PC-3 (cell line): ENCODE measurements at regions of chr14 and their contacts with region 1.

Region 1: DNA sequence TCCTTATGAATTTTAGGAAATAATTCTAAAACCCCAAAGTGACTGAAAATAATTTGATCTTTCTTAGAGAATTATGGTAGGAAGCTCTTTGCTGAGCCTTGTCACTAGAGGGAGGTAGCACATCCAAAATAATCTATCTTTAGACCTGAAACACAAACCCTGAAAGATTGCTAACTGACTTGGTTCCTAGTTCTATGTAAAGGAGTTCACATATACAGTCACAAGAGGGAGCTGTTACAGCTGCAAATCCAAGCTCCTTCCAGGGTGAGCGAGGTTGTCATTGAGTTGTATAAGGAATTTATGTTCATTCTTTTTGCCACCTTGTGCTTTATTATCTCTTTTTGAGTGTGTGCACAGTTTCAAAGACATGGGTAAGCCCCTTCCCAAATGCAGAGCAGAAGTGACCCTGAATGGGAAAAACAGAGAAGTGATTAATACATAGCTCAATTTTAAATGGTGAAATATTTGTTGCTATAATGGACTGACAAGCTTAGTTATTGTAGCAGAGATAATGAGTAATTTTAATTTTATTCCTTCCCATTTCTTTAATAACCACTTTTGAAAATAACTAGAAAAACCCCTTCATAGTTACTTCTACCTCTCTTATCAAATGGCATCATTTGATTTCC is 387.9 kb downstream of the DAD1 start:
- DNase-seq: peak; percentile 81
- ATAC-seq: peak; percentile 97
- H3K4me3 ChIP-seq: no peak overlapping the region
- H3K27ac ChIP-seq: no peak overlapping the region
- H3K4me1 ChIP-seq: no peaks in the 10 kb centered on the region
- H3K27me3 ChIP-seq: no peaks in the 10 kb centered on the region
- CTCF ChIP-seq: peak; percentile 93

Region 2: GRCh38 chr14:21233457-21234076 is 967.5 kb before region 1 on chr14:
- CTCF ChIA-PET with region 1: no interaction called
- POLR2A ChIA-PET with region 1: no interaction called
- intact Hi-C with region 1: no loop called
- DNase-seq: no peak
- ATAC-seq: 0 out of 2 replicates have a peak, but pooled peaks have one; percentile 22
- H3K4me3 ChIP-seq: no peak overlapping the region
- H3K27ac ChIP-seq: no peak overlapping the region
- H3K4me1 ChIP-seq: no peaks in the 10 kb centered on the region
- H3K27me3 ChIP-seq: no peaks in the 10 kb centered on the region
- CTCF ChIP-seq: peak; percentile 41; the same call in 1 of the 2 replicates

Region 3: DNA sequence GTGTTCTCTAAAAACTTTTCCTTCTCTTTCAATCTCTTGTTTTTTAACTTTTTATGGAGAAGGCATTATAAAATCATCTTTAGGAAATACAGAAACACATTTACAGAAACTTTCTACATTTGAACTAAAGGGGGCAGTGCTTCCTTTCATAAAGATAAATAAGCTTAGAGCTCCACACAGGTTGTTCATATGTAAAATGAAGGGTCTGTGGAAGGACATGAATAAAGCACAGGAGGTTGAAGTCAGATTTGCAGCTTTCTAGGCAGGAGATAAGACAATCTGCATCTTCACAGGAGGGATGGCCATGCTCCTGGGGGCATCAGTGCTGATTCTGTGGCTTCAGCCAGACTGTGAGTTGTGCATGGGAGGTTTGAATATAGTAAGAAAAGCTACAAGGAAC is 38.0 kb before region 1 on chr14:
- CTCF ChIA-PET with region 1: interaction called, 14 read pairs
- POLR2A ChIA-PET with region 1: no interaction called
- intact Hi-C with region 1: no loop called
- DNase-seq: peak; percentile 46
- ATAC-seq: peak; percentile 35; the same call in 1 of the 2 replicates
- H3K4me3 ChIP-seq: no peak overlapping the region
- H3K27ac ChIP-seq: no peak overlapping the region
- H3K4me1 ChIP-seq: peaks cover 27% of the 10 kb centered on the region
- H3K27me3 ChIP-seq: no peaks in the 10 kb centered on the region
- CTCF ChIP-seq: peak; percentile 67